ENCODE measurements at regions of chr14 and their contacts with region 1.

Region 1: GRCh38 chr14:44657696-44658388 is 150.8 kb upstream of the FSCB start:
- DNase-seq: peak; percentile 66
- ATAC-seq: peak; percentile 90
- H3K4me3 ChIP-seq: no peak overlapping the region
- H3K27ac ChIP-seq: no peak overlapping the region
- H3K4me1 ChIP-seq: no peaks in the 10 kb centered on the region
- H3K27me3 ChIP-seq: no peaks in the 10 kb centered on the region
- CTCF ChIP-seq: peak; percentile 81

Region 2: DNA sequence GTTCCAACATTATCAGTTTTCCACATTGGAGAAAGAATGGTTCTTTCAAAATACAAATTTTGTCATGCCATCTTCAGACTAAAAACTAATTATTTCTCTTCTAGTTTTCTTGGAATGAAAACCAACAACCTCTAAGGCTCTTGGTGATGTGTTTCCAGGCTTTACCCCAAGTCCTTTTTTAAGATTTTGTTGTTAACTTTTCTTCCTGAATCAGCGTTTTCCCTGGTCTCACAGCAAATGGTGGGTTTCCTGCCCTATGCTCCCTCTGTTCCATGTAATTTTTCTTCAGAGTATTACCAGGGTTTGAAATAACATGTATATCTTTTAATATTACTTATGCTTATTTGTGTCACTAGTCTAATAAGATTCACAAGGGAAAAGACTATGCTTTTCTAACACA is 1739.2 kb before region 1 on chr14:
- CTCF ChIA-PET with region 1: no interaction called
- POLR2A ChIA-PET with region 1: no interaction called
- intact Hi-C with region 1: loop called (anchors 5 kb)
- DNase-seq: no peak
- ATAC-seq: no peak
- H3K4me3 ChIP-seq: no peak overlapping the region
- H3K27ac ChIP-seq: no peak overlapping the region
- H3K4me1 ChIP-seq: no peaks in the 10 kb centered on the region
- H3K27me3 ChIP-seq: no peaks in the 10 kb centered on the region
- CTCF ChIP-seq: no peak

Region 3: DNA sequence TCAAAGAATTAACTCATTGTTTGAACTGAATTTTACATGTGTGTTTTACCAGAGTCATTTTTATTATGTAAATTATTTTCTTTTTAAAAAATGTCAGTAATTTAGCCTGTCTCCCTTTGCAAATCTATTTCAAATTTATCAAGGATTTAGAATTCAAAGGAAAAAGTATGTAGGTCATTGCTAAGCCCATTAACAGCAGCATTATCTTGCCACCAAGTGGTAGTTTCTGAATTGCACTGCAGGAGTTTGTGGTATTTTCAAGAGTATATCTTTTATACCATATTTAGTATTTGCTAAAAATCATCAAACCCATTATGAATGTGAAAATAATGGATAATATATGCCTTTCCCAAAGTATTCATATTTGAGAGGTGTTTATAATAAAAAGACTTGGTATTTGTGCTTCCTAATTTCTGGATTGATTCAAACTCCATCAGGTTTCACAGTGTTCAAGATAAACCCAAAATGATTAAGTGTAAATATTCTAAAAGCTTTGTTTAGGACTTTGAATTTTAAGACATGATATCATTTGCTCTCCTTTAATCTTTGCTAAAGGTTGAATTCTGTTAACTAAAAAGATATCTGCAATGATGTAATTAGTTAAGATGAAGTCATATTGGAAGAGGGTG is 862.1 kb before region 1 on chr14:
- CTCF ChIA-PET with region 1: no interaction called
- POLR2A ChIA-PET with region 1: no interaction called
- intact Hi-C with region 1: loop called (anchors 2 kb)
- DNase-seq: peak; percentile 51
- ATAC-seq: peak; percentile 73
- H3K4me3 ChIP-seq: no peak overlapping the region
- H3K27ac ChIP-seq: no peak overlapping the region
- H3K4me1 ChIP-seq: no peaks in the 10 kb centered on the region
- H3K27me3 ChIP-seq: no peaks in the 10 kb centered on the region
- CTCF ChIP-seq: peak; percentile 63

Region 4: DNA sequence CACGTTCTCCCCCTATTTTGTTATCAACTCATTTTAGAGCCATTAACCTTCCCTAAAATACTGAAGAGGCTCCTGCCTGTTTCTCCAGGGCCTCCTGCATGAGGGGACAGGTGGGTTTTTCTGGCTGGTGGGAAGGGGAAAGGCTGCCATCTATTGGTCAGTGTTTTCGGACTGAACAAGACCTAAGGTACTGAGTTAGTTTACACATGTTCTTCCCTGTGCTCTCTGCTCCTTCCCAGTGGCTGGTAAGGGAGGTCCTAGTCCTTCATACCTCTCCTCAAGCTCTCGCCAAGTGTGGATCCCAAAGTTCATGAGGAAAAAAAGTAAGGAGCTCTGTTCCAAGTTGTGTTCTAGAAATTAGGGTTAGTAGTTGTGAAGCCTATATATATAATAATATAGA is 508.2 kb before region 1 on chr14:
- CTCF ChIA-PET with region 1: no interaction called
- POLR2A ChIA-PET with region 1: no interaction called
- intact Hi-C with region 1: loop called (anchors 2 kb)
- DNase-seq: peak; percentile 66
- ATAC-seq: peak; percentile 98
- H3K4me3 ChIP-seq: no peak overlapping the region
- H3K27ac ChIP-seq: no peak overlapping the region
- H3K4me1 ChIP-seq: no peaks in the 10 kb centered on the region
- H3K27me3 ChIP-seq: no peaks in the 10 kb centered on the region
- CTCF ChIP-seq: peak; percentile 76

Region 5: DNA sequence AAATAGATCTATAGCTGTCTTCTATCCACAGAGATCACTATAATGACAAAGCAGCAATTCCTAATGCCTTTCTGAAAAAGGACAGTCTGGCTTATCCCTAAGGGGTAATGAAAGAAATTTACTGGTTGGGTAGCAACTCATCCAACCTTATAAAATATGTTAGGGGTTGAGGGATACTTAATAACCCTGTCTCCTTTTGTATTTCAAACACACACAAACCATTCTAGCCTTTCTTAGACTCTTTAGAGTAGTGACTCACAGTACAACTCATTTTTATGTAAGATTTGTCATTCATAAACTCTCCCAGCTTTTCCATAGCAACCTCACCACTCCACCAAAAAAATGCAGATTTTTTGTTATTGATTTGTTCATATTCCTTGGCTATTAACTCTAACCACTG is 318.6 kb before region 1 on chr14:
- CTCF ChIA-PET with region 1: no interaction called
- POLR2A ChIA-PET with region 1: no interaction called
- intact Hi-C with region 1: loop called (anchors 1 kb)
- DNase-seq: peak; percentile 89
- ATAC-seq: peak; percentile 97
- H3K4me3 ChIP-seq: no peak overlapping the region
- H3K27ac ChIP-seq: peak overlapping the region; percentile 86
- H3K4me1 ChIP-seq: peaks cover 21% of the 10 kb centered on the region
- H3K27me3 ChIP-seq: no peaks in the 10 kb centered on the region
- CTCF ChIP-seq: no peak

Region 6: GRCh38 chr14:44639781-44640385 is 18.0 kb before region 1 on chr14:
- CTCF ChIA-PET with region 1: no interaction called
- POLR2A ChIA-PET with region 1: no interaction called
- intact Hi-C with region 1: no loop called
- DNase-seq: no peak
- ATAC-seq: no peak
- H3K4me3 ChIP-seq: no peak overlapping the region
- H3K27ac ChIP-seq: no peak overlapping the region
- H3K4me1 ChIP-seq: no peaks in the 10 kb centered on the region
- H3K27me3 ChIP-seq: no peaks in the 10 kb centered on the region
- CTCF ChIP-seq: no peak

Region 7: GRCh38 chr14:44803239-44803905 is 145.5 kb after region 1 on chr14:
- CTCF ChIA-PET with region 1: no interaction called
- POLR2A ChIA-PET with region 1: no interaction called
- intact Hi-C with region 1: loop called (anchors 1 kb)
- DNase-seq: peak; percentile 77
- ATAC-seq: peak; percentile 95
- H3K4me3 ChIP-seq: no peak overlapping the region
- H3K27ac ChIP-seq: no peak overlapping the region
- H3K4me1 ChIP-seq: no peaks in the 10 kb centered on the region
- H3K27me3 ChIP-seq: no peaks in the 10 kb centered on the region
- CTCF ChIP-seq: peak; percentile 90

Region 8: DNA sequence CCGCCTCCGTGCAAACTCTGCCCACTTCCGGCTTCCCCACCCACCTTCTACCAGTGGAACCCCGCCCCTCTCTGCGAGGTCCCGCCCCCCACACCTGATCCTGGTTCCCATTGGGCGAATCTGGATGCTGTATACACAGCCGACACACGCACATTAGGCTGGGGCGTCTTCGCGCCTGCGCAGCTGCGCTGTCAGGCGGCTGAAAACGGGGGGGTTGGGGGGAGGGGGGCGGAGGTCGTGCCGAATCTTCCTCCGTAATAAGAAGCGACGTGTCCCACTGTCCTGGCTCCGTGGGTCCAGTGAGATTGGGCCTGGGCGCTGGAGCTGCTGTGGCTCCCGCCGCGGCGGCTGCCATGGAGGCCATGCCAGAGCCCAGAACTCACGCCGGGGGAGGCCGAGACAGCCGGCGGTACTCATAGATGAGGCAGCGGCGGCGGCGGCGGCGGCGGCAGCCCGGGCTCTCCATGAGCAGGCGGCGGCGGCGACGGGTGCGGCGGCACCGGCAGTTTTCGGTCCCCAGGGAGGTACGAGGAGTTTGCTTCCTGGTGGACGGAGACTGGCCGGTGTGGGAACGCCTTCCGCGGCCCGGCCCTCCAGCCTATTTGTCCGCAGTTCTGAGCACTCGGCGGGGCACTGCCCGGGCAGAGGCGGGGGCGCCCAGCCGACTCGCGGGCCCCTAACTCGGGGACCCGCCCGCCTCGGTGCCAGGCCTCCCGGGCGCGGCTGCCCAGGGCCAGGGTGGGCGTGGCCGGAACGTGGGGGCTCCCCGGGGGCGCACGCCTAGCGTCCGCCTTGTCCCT is 239.4 kb after region 1 on chr14:
- CTCF ChIA-PET with region 1: no interaction called
- POLR2A ChIA-PET with region 1: no interaction called
- intact Hi-C with region 1: no loop called
- DNase-seq: peak; percentile 98
- ATAC-seq: peak; percentile 93
- H3K4me3 ChIP-seq: peak overlapping the region; percentile 81
- H3K27ac ChIP-seq: peak overlapping the region; percentile 68
- H3K4me1 ChIP-seq: peaks cover 16% of the 10 kb centered on the region
- H3K27me3 ChIP-seq: no peaks in the 10 kb centered on the region
- CTCF ChIP-seq: no peak